ENCODE measurements at regions of chr3 and their contacts with region 1.

Region 1: DNA sequence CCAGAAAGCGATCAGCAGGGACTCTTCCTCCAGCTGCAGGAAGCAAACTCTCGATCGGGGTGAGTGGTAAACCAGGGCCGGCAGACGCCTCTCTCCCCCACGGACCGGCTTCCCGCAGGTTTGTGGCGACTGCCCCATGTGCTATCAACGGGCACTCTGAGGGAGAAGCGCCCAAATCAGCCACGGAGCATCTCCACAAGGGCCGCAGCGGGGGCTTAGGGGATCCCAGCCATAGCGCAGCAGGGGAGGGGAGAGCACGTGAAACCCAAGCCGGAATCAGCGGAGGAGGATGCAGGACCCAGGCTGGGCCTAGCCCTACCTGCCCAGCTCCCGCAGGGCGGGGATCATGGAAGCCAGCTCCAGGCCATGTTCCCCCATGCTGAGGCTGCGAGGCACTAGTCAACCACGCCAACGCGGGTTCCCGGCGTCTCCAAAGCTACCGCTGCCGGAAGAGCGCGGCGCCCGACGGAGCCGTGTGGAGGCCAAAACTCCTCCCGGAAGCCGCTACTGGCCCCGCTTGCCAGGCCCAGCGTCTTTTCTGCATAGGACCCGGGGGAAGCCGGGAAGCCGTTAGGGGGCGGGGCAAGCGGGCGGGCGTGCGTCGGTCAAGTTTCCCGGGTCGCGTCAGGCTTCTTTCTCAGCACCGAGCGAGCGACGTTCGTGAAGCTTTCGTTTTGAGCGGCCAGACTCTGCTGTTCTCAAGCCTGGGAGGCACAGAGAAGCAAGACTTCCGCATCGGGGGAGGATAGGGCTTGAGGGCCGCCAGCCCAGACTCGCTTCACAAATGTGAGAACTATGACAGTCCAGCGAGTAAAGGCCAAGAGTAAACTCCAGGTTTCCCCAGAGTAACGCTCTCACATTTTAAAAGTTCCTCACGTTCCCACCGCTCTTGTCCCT is at the start of gene ATR:
- ATAC-seq: peak; percentile 90 to 98 (median 96)
- H3K4me3 ChIP-seq: peak within 1 kb of the TSS; percentile 49 to 83 (median 70)
- H3K27ac ChIP-seq: peak within 1 kb of the TSS; percentile 67 to 83
- H3K4me1 ChIP-seq: peaks cover 6 to 15% of the 10 kb centered on the region in 2 donors
- total RNA-seq, gene ATR: 16.4 to 46.2 (median 23.4) TPM

Region 2: DNA sequence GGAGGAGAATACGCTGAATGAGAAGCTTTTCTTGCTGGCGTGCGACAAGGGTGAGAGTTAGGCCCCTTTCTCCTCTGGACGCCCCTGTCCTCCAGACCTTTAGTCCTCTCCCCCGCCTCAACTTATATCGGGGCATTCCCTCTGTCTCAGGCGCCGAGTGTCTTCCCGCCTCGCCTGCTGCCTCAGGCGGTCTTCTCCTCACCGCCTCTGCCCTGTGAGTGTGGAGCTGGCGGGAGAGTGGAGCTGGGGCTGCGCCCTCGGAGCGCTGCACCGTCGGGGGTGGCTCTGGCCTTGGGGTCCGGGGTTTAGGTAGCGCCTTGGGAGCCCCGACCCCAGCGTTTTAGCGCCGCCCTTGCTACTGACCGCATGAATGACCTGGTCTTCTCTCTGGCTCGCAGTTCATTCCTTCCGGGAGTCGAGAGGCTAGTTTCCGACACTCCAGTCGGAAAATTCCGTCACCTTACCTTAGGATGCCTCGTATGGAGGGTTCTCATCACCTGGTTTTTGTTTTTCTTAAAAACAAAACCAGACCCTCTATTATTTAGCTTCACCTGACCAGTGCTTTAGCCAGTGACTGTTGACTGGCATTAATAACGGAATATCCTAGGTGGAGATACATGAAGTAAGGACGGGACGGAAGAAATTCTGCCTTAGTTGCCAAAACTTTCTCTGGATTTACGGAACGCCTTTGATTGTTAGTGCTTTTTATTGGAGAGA is 146.3 kb after region 1 on chr3:
- in situ Hi-C with region 1: loop called in 1 of 9 experiments (anchors 25 kb)
- ATAC-seq: peak; percentile 16 to 69 (median 37)
- H3K4me3 ChIP-seq: peak overlapping the region; percentile 89 to 98 (median 95)
- H3K27ac ChIP-seq: peak overlapping the region; percentile 98 to 99
- H3K4me1 ChIP-seq: peaks cover 2 to 15% of the 10 kb centered on the region in 2 donors

Region 3: DNA sequence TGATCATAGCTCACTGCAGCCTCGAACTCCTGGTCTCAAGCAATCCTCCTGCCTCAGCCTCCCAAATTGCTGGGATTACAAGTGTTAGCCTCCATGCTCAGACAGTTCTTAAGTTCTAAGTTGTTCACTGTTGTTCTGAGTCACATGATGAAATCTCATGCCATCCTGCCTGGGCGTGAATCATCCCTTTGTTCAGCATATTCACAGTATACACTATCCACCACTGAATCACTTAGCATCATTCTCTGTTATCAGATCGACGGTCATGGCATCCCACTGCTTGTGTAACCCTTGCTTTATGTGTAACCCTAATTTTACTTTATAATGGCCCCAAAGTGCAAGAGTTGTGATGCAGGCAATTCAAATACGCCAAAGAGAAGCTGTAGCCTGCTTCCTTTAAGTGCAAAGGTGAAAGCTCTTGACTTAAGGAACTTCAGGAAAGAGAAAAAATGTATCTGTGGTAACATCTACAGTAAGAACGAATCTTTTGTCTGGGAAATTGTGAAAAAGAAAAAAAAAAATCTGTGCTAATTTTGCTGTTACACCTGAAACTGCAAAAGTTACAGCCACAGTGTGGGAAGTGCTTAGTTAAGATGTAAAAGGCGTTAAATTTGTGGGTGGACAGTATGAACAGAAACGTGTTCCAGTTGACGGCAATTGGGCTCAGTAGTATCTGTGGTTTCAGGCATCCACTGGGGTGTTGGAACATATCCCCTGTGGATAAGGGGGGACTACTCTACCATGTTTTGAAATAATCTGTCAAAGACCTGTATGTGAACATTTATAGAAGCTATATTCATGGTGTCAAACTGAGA is 229.7 kb after region 1 on chr3:
- in situ Hi-C with region 1: loop called in 2 of 9 experiments (anchors 25 kb)
- ATAC-seq: peak in 6 of 8 experiments; percentile 35 to 100 (median 72)
- H3K4me3 ChIP-seq: no peak overlapping the region
- H3K27ac ChIP-seq: no peak overlapping the region
- H3K4me1 ChIP-seq: no peaks in the 10 kb centered on the region

Region 4: DNA sequence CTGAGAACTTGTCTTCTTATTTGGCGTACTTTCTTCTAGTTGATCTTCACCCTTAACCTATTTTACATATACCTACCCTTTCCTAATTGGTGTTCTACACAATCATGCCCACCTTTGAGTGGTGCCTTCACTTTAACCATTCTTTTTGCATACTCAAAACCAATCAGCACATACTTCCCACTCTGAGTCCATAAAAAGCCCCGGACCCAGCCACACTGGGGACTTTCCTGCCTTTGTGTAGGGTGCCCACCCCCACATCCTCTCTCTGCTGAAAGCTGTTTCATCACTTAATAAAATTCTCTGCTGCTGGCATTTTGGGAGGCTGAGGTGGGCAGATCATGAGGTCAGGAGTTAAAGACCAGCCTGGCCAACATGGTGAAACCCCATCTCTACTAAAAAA is 525.1 kb after region 1 on chr3:
- in situ Hi-C with region 1: no loop called
- ATAC-seq: no peak
- H3K4me3 ChIP-seq: no peak overlapping the region
- H3K27ac ChIP-seq: no peak overlapping the region
- H3K4me1 ChIP-seq: no peaks in the 10 kb centered on the region